ENCODE measurements at regions of chr9 and their contacts with region 1.

Region 1: DNA sequence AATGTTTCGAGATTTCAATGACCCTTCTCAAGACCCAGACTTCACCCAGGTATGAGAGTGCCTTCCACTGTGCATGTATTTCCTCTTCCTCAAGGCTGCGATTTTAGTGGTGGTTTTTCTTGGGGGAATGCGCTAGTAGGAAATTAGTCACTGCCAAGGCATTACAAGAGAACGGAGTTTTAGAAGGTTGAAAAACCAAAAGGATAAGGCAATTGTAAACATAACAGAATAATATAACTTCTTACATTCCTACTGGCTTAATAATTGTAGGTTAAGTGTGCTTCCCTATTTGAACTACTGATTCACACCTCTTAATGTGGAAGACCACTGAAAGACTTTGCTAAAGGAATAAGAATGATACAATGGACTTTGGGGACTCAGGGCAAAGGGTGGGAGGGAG is 38.9 kb downstream of the ACO1 start:
- DNase-seq: no peak
- ATAC-seq: no peak
- H3K4me3 ChIP-seq: no peak overlapping the region
- H3K27ac ChIP-seq: peak overlapping the region in 2 of 3 donors; percentile 66 to 85
- H3K4me1 ChIP-seq: peaks cover 0 to 44% (median 20%) of the 10 kb centered on the region in 4 donors
- H3K27me3 ChIP-seq: no peaks in the 10 kb centered on the region
- CTCF ChIP-seq: no peak
- POLR2A ChIP-seq: no peak

Region 2: DNA sequence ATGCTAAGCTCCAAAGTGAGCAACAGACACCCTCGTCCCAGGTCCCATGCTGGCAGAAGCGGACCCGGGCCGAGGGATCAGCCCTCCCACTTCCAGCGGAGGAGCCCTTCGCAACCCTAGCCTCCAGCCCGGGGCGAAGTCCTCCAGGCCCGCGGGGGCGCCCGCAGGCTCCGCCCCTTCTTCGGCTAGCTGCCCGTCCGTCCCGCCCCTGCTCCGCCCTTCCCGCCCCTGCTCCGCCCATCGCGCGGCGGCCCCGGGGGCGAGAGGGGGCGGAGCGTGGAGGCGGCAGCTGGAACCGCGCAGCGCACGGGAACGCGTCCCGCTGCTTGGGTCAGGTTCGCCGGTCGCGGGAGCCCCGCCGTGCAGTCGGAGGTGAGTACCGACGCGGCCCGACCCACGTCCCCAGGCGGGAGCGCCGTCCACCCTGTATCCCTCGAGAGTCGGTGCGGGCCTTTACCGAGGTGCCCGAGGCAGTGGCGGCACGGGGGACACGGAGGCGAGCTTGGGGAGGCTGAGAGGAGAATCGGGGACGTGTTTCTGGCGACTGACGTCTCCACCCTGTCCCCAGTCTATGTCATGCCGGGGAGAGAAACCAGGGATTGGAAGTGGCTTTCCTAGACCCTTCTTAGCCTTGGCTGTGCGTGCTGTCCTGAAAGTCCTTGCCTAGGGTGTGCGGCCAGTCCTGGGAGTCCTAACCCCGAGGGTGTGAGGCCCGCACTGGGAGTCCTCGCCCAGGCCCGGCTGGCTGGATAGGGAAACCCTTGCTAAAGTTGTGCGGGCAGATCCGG is 38.8 kb before region 1 on chr9 and contains the start of gene ACO1:
- intact Hi-C with region 1: loop called in 1 of 2 experiments (anchors 5 kb)
- DNase-seq: peak; percentile 96
- ATAC-seq: peak; percentile 93 to 97 (median 94)
- H3K4me3 ChIP-seq: peak within 1 kb of the TSS; percentile 71 to 92 (median 72)
- H3K27ac ChIP-seq: peak within 1 kb of the TSS; percentile 89 to 94 (median 91)
- H3K4me1 ChIP-seq: peaks cover 0 to 46% (median 19%) of the 10 kb centered on the region in 4 donors
- H3K27me3 ChIP-seq: no peaks in the 10 kb centered on the region
- CTCF ChIP-seq: peak in 3 of 4 donors; percentile 6 to 20 (median 13)
- POLR2A ChIP-seq: peak; percentile 97
- total RNA-seq, gene ACO1: 75.4 to 108 (median 98.1) TPM